IMR-90 (cell line): ENCODE measurements at regions of chr6 and their contacts with region 1.

Region 1: DNA sequence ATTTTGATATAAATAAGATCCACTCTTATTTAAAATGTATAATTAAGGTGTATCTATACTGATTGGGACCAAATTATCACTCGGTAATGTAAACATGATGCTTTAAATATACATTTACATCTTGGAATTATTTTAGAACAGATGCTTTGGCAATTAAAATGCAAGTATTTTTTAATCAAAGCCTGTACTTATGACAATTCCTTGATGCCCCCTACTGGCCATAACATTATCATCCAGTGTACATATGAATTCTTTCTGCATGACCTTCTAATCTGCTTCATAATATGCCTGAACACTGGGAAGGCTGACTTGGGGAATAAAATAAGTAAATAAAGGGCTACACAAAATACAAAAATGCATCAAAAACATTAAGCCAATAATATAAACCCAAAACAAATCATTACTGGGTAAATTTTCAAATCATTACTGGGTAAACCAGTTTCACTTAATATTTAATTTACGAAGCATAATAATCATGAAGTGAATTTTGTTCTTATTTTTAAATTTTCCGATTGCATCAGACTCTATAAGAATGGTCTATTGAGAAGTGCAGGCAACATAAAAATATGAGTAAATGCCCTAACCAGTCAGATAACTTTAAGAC is 65.1 kb downstream of the CGA start:
- DNase-seq: peak; percentile 72
- ATAC-seq: peak; percentile 85
- H3K4me3 ChIP-seq: no peak overlapping the region
- H3K27ac ChIP-seq: no peak overlapping the region
- H3K4me1 ChIP-seq: no peaks in the 10 kb centered on the region
- H3K27me3 ChIP-seq: no peaks in the 10 kb centered on the region
- CTCF ChIP-seq: peak; percentile 60
- POLR2A ChIP-seq: no peak
- RAD21 ChIP-seq: peak; percentile 33

Region 2: DNA sequence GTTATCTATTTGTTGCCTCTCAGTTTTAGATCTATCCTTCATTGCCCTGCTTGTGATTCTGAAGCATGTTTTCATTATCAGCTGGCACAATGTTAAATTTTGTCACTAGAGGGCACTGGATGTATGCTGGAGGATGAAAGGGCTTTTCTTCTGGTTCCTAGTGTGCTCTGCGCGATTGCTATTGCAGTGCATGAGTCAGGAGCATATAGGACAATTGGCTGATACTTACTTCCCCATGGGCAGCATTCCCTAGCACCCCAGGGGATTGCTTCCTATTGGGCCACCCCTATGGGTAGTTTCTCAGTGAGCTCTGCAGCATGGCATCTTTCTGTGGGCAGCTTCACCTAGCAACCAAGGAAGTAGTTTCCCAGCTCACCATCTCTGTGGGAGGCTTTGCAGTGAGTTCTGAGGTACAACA is 1106.8 kb before region 1 on chr6:
- CTCF ChIA-PET with region 1: no interaction called
- POLR2A ChIA-PET with region 1: no interaction called
- dilution Hi-C with region 1: no loop called
- in situ Hi-C with region 1: no loop called
- intact Hi-C with region 1: loop called (anchors 2 kb)
- DNase-seq: peak; percentile 51
- ATAC-seq: peak; percentile 88
- H3K4me3 ChIP-seq: no peak overlapping the region
- H3K27ac ChIP-seq: no peak overlapping the region
- H3K4me1 ChIP-seq: no peaks in the 10 kb centered on the region
- H3K27me3 ChIP-seq: no peaks in the 10 kb centered on the region
- CTCF ChIP-seq: peak; percentile 57
- POLR2A ChIP-seq: no peak
- RAD21 ChIP-seq: peak; percentile 70

Region 3: DNA sequence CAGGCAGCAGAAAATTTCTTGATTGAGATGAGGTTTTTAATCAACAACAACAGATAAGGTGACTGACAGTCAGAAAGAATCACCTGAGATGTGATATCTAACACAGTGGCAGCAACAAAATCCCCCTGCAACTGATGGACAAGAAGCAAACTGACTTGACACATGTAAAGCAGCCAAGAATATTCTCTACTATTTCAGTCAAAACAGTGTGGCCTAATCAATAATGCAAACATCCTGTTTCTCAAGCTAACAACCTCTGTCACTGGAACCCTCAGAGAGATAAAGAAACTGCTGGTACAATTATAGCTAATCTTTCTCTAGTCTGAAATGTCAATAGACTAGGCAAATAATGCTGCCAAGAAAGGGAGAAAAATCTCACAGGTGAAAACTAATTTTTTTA is 69.7 kb after region 1 on chr6:
- CTCF ChIA-PET with region 1: no interaction called
- POLR2A ChIA-PET with region 1: no interaction called
- dilution Hi-C with region 1: no loop called
- in situ Hi-C with region 1: no loop called
- intact Hi-C with region 1: no loop called
- DNase-seq: no peak
- ATAC-seq: no peak
- H3K4me3 ChIP-seq: no peak overlapping the region
- H3K27ac ChIP-seq: no peak overlapping the region
- H3K4me1 ChIP-seq: no peaks in the 10 kb centered on the region; the same call in 1 of the 2 replicates
- H3K27me3 ChIP-seq: no peaks in the 10 kb centered on the region
- CTCF ChIP-seq: no peak
- POLR2A ChIP-seq: no peak
- RAD21 ChIP-seq: no peak